OCI-LY7 (cell line): ENCODE measurements at regions of chr10 and their contacts with region 1.

Region 1: GRCh38 chr10:1420661-1421362 is 316.5 kb downstream of the ADARB2 start:
- DNase-seq: peak; percentile 91
- H3K4me3 ChIP-seq: peak overlapping the region; percentile 9
- H3K27ac ChIP-seq: no peak overlapping the region
- H3K4me1 ChIP-seq: peaks cover 27% of the 10 kb centered on the region
- CTCF ChIP-seq: peak; percentile 92

Region 2: GRCh38 chr10:1434912-1435692 is 14.3 kb after region 1 on chr10:
- CTCF ChIA-PET with region 1: no interaction called
- POLR2A ChIA-PET with region 1: no interaction called
- intact Hi-C with region 1: no loop called
- DNase-seq: no peak
- H3K4me3 ChIP-seq: no peak overlapping the region
- H3K27ac ChIP-seq: no peak overlapping the region
- H3K4me1 ChIP-seq: no peaks in the 10 kb centered on the region
- CTCF ChIP-seq: no peak

Region 3: GRCh38 chr10:1454428-1454827 is 33.6 kb after region 1 on chr10:
- CTCF ChIA-PET with region 1: no interaction called
- POLR2A ChIA-PET with region 1: no interaction called
- intact Hi-C with region 1: loop called (anchors 5 kb)
- DNase-seq: peak; percentile 92
- H3K4me3 ChIP-seq: peak overlapping the region; percentile 55
- H3K27ac ChIP-seq: peak overlapping the region; percentile 79
- H3K4me1 ChIP-seq: peaks cover 30% of the 10 kb centered on the region
- CTCF ChIP-seq: no peak

Region 4: GRCh38 chr10:1488969-1489548 is 68.2 kb after region 1 on chr10:
- CTCF ChIA-PET with region 1: interaction called, 10 read pairs
- POLR2A ChIA-PET with region 1: interaction called, 3 read pairs
- intact Hi-C with region 1: loop called (anchors 2 kb)
- DNase-seq: peak; percentile 93
- H3K4me3 ChIP-seq: peak overlapping the region; percentile 46
- H3K27ac ChIP-seq: peak overlapping the region; percentile 62
- H3K4me1 ChIP-seq: peaks cover 54% of the 10 kb centered on the region
- CTCF ChIP-seq: 0 out of 2 replicates have a peak, but pooled peaks have one; percentile 10

Region 5: GRCh38 chr10:1516492-1517165 is 95.8 kb after region 1 on chr10:
- CTCF ChIA-PET with region 1: no interaction called
- POLR2A ChIA-PET with region 1: no interaction called
- intact Hi-C with region 1: loop called (anchors 5 kb)
- DNase-seq: no peak
- H3K4me3 ChIP-seq: no peak overlapping the region
- H3K27ac ChIP-seq: no peak overlapping the region
- H3K4me1 ChIP-seq: peaks cover 5% of the 10 kb centered on the region
- CTCF ChIP-seq: no peak

Region 6: DNA sequence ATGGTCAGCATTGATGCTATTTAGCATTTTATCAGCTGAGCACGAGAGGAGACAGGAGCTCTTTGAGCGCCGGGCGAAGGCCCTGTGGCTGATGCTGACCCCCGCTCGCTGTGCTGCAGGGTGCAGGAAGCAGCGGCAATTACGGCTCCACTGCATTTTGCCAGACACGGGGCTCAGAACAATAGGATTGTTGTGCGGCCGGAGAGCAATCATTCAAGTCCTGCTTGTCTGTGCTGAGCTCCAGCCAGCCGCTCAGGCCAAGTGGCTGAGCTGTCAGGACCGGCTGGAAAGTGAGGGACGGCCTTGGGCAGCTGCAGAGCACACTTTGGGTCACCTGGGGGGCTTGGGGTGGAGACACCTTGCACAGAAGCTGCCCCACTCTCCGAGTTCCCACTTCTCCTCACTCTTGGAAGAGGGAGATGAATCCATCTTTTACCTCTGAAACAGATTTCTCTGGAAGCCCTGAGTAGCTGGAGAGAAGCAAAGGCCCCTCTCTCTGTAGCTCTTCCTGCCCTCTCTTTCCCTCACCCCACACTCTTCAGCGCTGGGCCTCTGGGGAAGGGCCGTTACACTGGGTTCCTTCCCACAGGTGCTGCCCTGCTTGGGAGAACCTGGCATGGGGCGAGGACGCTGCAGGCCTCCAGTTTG is 333.8 kb after region 1 on chr10:
- CTCF ChIA-PET with region 1: no interaction called
- POLR2A ChIA-PET with region 1: no interaction called
- intact Hi-C with region 1: loop called (anchors 5 kb)
- DNase-seq: no peak
- H3K4me3 ChIP-seq: no peak overlapping the region
- H3K27ac ChIP-seq: no peak overlapping the region
- H3K4me1 ChIP-seq: no peaks in the 10 kb centered on the region
- CTCF ChIP-seq: no peak